ENCODE measurements at regions of chr4 and their contacts with region 1.

Region 1: GRCh38 chr4:41611881-41612871 is 74.2 kb downstream of the LIMCH1 start:
- DNase-seq: no peak

Region 2: DNA sequence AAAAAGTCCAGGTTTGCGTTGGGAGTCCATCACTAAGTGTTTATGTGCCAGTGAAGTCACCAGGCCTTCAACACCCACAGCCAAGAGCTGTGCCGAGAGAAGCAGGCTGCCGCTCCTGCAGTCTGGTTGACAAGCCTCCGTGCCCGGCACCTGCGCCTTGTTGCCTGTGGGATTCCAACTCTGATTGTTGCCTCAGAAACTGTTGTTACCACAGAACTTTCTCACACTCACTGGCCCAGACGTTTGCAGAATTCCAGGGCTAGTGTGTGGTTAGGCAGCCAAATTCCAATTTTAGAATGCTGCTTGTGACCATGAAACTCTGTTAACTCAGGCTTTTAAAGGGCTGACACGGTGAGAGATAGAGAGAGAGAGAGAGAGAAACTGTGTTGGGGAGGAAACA is 193.7 kb before region 1 on chr4:
- intact Hi-C with region 1: no loop called
- DNase-seq: peak; percentile 86

Region 3: GRCh38 chr4:41437111-41437536 is 175.1 kb before region 1 on chr4:
- intact Hi-C with region 1: loop called (anchors 5 kb)
- DNase-seq: no peak

Region 4: GRCh38 chr4:41485041-41485440 is 127.1 kb before region 1 on chr4:
- intact Hi-C with region 1: no loop called
- DNase-seq: no peak

Region 5: DNA sequence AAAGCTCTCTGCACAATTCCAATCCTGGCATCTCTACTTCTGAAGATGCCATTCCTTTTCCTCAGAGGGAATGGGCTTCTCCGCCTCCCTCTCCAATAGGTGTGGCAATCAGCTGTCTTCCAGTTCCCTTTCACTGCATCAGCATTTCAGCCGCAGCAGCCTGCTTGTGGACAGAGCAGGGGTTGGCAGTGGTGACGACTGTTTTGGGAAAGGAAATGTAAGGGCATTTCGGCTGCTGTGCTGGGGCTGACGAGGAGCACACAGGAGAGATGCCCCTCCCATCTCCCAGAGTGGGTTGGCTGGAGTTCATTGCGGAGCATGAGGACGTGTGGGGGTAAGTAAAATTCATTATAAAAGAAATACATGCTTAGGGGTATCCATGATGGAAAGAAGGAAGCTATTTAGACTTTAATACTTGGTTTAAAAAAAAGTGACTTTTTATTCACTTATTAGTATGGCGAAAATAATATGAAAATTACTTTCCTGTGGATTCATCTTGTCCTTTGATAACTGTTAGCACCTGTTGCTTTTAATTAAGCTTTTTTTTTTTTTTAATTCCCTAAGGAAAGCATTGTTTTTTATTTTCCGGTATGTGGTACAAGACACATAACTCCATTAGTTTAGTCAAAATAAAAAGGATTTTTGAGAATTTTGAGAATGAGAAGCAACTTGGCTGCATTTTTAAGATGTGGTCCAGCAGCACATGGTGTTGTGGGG is 74.0 kb before region 1 on chr4 and contains the start of gene LIMCH1:
- intact Hi-C with region 1: loop called (anchors 2 kb)
- DNase-seq: peak; percentile 86
- total RNA-seq, gene LIMCH1: 291 TPM

Region 6: GRCh38 chr4:41545238-41545637 is 66.9 kb before region 1 on chr4:
- intact Hi-C with region 1: loop called (anchors 2 kb)
- DNase-seq: no peak

Region 7: GRCh38 chr4:41569961-41570360 is 42.2 kb before region 1 on chr4:
- intact Hi-C with region 1: loop called (anchors 5 kb)
- DNase-seq: no peak

Region 8: DNA sequence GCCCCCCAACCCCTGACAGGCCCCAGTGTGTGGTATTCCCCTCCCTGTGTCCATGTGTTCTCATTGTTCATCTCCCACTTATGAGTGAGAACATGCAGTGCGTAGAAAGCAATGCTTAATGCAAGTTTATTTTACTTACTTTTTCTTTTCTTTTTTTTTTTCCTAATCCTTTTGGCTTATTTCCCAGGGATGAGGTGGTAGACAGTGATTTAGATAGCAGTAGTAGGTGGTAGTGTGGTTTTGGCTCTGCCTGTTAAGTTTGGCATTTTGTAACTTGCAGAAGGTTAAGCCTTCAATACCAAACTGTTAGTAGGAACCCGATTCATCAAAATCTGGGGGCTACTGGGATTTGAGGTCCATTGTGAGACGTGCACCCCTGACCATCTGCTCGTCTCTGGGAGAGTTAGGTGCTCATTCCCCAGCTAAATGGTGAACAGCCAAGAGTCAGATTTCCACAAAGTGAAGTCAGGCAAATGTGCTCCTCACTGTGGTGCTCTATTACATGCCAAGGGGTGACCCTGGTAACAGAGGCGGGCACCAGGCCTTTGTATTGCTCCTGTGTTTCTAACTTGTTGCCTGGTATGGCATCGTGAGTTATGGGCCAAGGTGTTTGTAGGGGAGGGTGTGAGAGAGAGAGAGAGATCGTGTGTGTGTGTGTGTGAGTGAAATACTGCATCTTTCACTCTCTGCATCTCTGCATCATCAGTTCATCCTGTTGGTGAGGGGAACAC is 66.1 kb after region 1 on chr4:
- intact Hi-C with region 1: no loop called
- DNase-seq: no peak